ENCODE measurements at regions of chr11 and their contacts with region 1.

Region 1: DNA sequence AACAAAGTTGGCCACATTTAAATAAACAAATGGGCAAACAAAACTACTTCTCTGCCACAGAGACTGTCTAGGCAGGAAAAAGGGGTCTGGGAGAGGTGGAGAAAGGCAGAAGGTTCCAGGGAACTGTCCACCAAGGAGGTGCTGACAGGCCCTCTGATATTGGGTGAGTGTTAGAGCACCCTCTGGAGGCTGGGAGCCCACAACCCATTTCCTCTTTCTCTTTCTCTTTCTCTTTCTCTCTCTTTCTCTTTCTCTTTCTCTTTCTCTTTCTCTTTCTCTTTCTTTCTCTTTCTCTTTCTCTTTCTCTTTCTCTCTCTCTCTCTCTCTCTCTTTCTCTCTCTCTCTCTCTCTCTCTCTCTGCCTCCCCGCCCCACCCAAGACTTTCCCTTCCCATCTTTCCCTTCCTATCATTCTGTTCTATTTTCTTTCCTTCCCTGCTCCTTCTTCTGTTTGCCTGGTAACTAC is 912.8 kb downstream of the DLG2 start:
- DNase-seq: peak; percentile 63 to 87
- H3K4me3 ChIP-seq: no peak overlapping the region
- H3K4me1 ChIP-seq: no peaks in the 10 kb centered on the region
- H3K27me3 ChIP-seq: no peaks in the 10 kb centered on the region

Region 2: DNA sequence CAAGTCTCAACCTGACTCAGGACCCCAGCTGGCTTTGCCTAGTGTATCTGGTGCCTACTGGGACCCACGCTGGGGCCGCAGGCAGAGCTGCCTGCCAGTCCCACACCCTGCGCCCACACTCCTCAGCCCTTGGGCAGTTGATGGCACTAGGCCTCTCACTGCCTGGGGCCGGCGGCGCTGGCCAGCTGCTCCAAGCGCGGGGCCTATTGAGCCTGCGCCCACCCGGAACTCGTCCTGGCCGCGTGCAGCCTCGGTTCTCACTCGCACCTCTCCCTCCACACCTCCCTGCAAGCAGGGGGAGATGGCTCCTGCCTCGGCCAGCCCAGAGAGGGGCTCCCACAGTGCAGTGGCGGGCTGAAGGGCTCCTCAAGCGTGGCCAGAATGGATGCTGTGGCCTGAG is 519.7 kb before region 1 on chr11:
- in situ Hi-C with region 1: no loop called
- DNase-seq: no peak
- H3K4me3 ChIP-seq: no peak overlapping the region
- H3K4me1 ChIP-seq: no peaks in the 10 kb centered on the region
- H3K27me3 ChIP-seq: peaks cover 11% of the 10 kb centered on the region

Region 3: GRCh38 chr11:84558085-84558905 is 156.1 kb before region 1 on chr11:
- in situ Hi-C with region 1: loop called (anchors 25 kb)
- DNase-seq: peak; percentile 57 to 76
- H3K4me3 ChIP-seq: no peak overlapping the region
- H3K4me1 ChIP-seq: no peaks in the 10 kb centered on the region
- H3K27me3 ChIP-seq: no peaks in the 10 kb centered on the region